K562 (cell line): ENCODE measurements at regions of chr22 and their contacts with region 1.

Region 1: GRCh38 chr22:19143967-19144400 is 467 bp downstream of the ESS2 start:
- DNase-seq: peak; percentile 79 to 82 (median 80)
- ATAC-seq: peak; percentile 48
- H3K4me3 ChIP-seq: peak overlapping the region; percentile 59
- H3K27ac ChIP-seq: peak overlapping the region; percentile 50
- H3K4me1 ChIP-seq: peaks cover 4 to 19% of the 10 kb centered on the region in 2 experiments; a peak in 4 of 5 replicates
- H3K27me3 ChIP-seq: peaks cover 14 to 26% of the 10 kb centered on the region in 2 experiments; a peak in 4 of 5 replicates
- CTCF ChIP-seq: no peak
- EP300 ChIP-seq: no peak
- POLR2A ChIP-seq: no peak
- RAD21 ChIP-seq: no peak

Region 2: DNA sequence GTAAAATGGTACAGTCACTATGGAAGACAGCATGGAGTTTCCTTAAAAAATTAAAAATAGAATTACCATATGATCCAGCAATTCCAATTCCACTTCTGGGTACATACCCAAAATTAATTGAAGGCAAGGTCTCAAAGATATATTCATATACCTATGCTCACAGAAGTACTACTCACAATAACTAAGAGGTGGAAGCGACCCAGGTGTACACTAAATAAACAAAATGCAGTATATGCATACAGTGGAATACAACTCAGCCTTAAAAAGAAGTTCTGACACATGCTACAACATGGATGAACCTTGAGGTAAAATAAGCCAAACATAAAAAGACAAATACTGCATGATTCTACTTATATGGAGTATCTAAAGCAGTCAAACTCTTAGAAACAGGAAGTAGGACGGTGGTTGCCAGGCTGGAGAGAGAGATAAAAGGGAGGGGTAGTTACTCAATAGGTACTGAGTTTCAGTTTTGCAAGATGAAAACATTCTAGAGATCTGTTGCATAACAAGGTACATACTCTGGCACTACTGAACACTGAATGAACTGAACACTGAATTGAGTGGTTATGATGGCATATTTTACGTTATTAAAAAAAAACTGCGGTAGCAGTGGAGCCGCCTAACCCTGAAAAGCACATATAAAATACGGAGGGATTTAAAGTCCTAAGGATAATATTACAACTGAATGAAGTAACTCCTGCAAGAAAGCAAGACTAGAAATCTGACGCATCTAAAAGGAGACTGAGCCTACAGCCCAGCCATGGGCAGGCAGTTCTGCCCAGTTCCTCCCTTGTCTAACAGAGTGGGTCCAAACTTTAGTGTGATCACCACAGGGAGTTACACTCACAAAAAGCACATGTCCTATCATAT is 34.6 kb before region 1 on chr22:
- CTCF ChIA-PET with region 1: interaction called, 3 read pairs
- POLR2A ChIA-PET with region 1: interaction called, 7 read pairs
- in situ Hi-C with region 1: no loop called
- intact Hi-C with region 1: loop called (anchors 1 kb)
- DNase-seq: peak in 3 of 4 experiments; percentile 57 to 95 (median 95)
- ATAC-seq: peak; percentile 89
- H3K4me3 ChIP-seq: peak overlapping the region; percentile 14
- H3K27ac ChIP-seq: peak overlapping the region; percentile 47
- H3K4me1 ChIP-seq: peaks cover 38 to 44% of the 10 kb centered on the region in 2 experiments
- H3K27me3 ChIP-seq: no peaks in the 10 kb centered on the region
- CTCF ChIP-seq: no peak
- EP300 ChIP-seq: peak; percentile 96
- POLR2A ChIP-seq: no peak
- RAD21 ChIP-seq: peak; percentile 16 to 23; a peak in 2 of 4 replicates

Region 3: DNA sequence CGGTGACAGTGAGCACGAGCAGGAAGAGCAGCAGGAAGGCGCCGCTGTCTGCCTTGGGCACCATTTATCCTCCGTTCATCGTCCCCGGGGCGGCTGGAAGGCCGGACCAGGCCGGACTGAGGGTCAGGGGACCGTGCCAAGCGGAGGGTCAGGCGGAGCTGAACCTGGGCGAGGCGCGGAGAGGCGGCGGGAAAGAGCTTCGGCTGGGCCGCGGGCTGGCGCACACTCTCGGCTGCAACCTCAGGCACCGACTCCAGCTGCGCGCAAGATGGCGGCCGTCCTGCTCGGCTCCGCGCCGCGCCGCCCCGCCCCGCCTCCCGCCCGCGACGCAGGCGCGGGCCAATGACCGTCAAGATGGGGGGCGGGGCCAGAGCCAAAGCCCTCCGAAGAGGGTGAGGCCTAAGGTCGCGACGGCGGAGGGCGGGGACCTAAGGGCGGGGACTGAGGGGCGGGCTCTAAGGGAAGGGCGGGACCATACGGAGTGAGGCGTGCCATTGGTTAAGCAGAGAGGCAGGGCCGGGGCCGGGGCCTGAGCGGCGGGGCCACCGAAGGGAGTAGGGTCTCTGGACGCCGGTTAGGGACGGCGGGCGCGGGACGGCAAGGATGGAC is 21.7 kb before region 1 on chr22 and contains the start of gene DGCR2:
- CTCF ChIA-PET with region 1: no interaction called
- POLR2A ChIA-PET with region 1: interaction called, 19 read pairs
- in situ Hi-C with region 1: no loop called
- intact Hi-C with region 1: loop called (anchors 1 kb)
- DNase-seq: peak; percentile 100
- ATAC-seq: peak; percentile 96
- H3K4me3 ChIP-seq: peak within 1 kb of the TSS; percentile 77
- H3K27ac ChIP-seq: peak within 1 kb of the TSS; percentile 77
- H3K4me1 ChIP-seq: peaks cover 30 to 52% of the 10 kb centered on the region in 2 experiments
- H3K27me3 ChIP-seq: peaks cover 18 to 26% of the 10 kb centered on the region in 2 experiments; a peak in 4 of 5 replicates
- CTCF ChIP-seq: no peak; a peak in 1 of 6 replicates
- EP300 ChIP-seq: 0 out of 2 replicates have a peak, but pooled peaks have one; percentile 3
- POLR2A ChIP-seq: peak; percentile 98
- RAD21 ChIP-seq: no peak
- polyA plus RNA-seq, gene DGCR2: 0.69 to 0.70 TPM

Region 4: GRCh38 chr22:19168211-19168890 is 24.4 kb after region 1 on chr22:
- CTCF ChIA-PET with region 1: interaction called, 3 read pairs
- POLR2A ChIA-PET with region 1: interaction called, 13 read pairs
- in situ Hi-C with region 1: no loop called
- intact Hi-C with region 1: no loop called
- DNase-seq: peak in 3 of 4 experiments; percentile 77 to 83 (median 78)
- ATAC-seq: peak; percentile 13
- H3K4me3 ChIP-seq: no peak overlapping the region
- H3K27ac ChIP-seq: no peak overlapping the region
- H3K4me1 ChIP-seq: peaks cover 29 to 52% of the 10 kb centered on the region in 2 experiments
- H3K27me3 ChIP-seq: peaks cover 29 to 44% of the 10 kb centered on the region in 2 experiments
- CTCF ChIP-seq: peak; percentile 82 to 99 (median 90)
- EP300 ChIP-seq: peak; percentile 20; the same call in 1 of the 2 replicates
- POLR2A ChIP-seq: no peak
- RAD21 ChIP-seq: peak in 1 of 2 experiments; percentile 55; a peak in 2 of 4 replicates

Region 5: GRCh38 chr22:19195796-19196731 is 52.1 kb after region 1 on chr22:
- CTCF ChIA-PET with region 1: no interaction called
- POLR2A ChIA-PET with region 1: no interaction called
- in situ Hi-C with region 1: no loop called
- intact Hi-C with region 1: loop called (anchors 2 kb)
- DNase-seq: peak; percentile 61 to 76 (median 74)
- ATAC-seq: peak; percentile 22
- H3K4me3 ChIP-seq: no peak overlapping the region
- H3K27ac ChIP-seq: no peak overlapping the region
- H3K4me1 ChIP-seq: peaks cover 3 to 7% of the 10 kb centered on the region in 2 experiments; a peak in 4 of 5 replicates
- H3K27me3 ChIP-seq: peaks cover 66 to 82% of the 10 kb centered on the region in 2 experiments
- CTCF ChIP-seq: no peak
- EP300 ChIP-seq: no peak
- POLR2A ChIP-seq: no peak
- RAD21 ChIP-seq: 0 out of 4 replicates have a peak, but pooled peaks of 1 of the 2 experiments have one; percentile 3

Region 6: GRCh38 chr22:19291580-19292457 is 147.8 kb after region 1 on chr22 and contains the start of gene CLTCL1:
- CTCF ChIA-PET with region 1: interaction called, 4 read pairs
- POLR2A ChIA-PET with region 1: no interaction called
- in situ Hi-C with region 1: no loop called
- intact Hi-C with region 1: loop called (anchors 1 kb)
- DNase-seq: peak; percentile 94 to 100 (median 100)
- ATAC-seq: peak; percentile 84
- H3K4me3 ChIP-seq: peak within 1 kb of the TSS; percentile 61
- H3K27ac ChIP-seq: peak within 1 kb of the TSS; percentile 67
- H3K4me1 ChIP-seq: peaks cover 25% of the 10 kb centered on the region in 2 experiments; a peak in 4 of 5 replicates
- H3K27me3 ChIP-seq: peaks cover 34 to 35% of the 10 kb centered on the region in 2 experiments; a peak in 4 of 5 replicates
- CTCF ChIP-seq: peak in 1 of 3 experiments; percentile 10; a peak in 2 of 6 replicates
- EP300 ChIP-seq: peak; percentile 14; the same call in 1 of the 2 replicates
- POLR2A ChIP-seq: peak; percentile 89
- RAD21 ChIP-seq: peak in 1 of 2 experiments; percentile 44; a peak in 2 of 4 replicates
- polyA plus RNA-seq, gene CLTCL1: 1.1 to 2.1 TPM